ENCODE measurements at regions of chr9 and their contacts with region 1.

Region 1: GRCh38 chr9:120650352-120650751 is 63.9 kb downstream of the MEGF9 start:
- DNase-seq: no peak
- H3K4me3 ChIP-seq: no peak overlapping the region
- H3K27ac ChIP-seq: no peak overlapping the region
- H3K4me1 ChIP-seq: no peaks in the 10 kb centered on the region
- H3K27me3 ChIP-seq: no peaks in the 10 kb centered on the region
- CTCF ChIP-seq: no peak
- POLR2A ChIP-seq: no peak

Region 2: GRCh38 chr9:120592210-120592609 is 58.1 kb before region 1 on chr9:
- intact Hi-C with region 1: no loop called
- DNase-seq: no peak
- H3K4me3 ChIP-seq: no peak overlapping the region
- H3K27ac ChIP-seq: no peak overlapping the region
- H3K4me1 ChIP-seq: no peaks in the 10 kb centered on the region
- H3K27me3 ChIP-seq: no peaks in the 10 kb centered on the region
- CTCF ChIP-seq: no peak
- POLR2A ChIP-seq: no peak

Region 3: DNA sequence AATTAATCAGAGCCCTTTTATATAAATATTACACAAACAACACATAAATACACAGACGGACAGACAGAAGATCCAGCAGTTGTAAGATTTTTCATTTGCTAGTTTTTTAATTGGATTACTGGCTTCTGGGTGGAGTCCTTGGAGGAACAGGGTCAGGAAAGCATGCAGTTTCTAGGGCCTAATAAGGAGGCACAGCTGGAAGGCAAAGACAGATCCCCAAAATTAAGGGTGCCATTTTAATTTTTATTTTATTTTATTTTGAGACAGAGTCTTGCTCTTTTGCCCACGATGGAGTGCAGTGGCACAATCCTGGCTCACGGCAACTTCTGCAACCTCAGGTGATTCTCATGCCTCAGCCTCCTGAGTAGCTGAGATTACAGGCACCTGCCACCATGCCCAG is 1770.0 kb after region 1 on chr9:
- intact Hi-C with region 1: loop called (anchors 5 kb)
- DNase-seq: no peak
- H3K4me3 ChIP-seq: no peak overlapping the region
- H3K27ac ChIP-seq: no peak overlapping the region
- H3K4me1 ChIP-seq: no peaks in the 10 kb centered on the region
- H3K27me3 ChIP-seq: no peaks in the 10 kb centered on the region
- CTCF ChIP-seq: no peak
- POLR2A ChIP-seq: no peak

Measured in vagina (tissue), 2 donors.